Activated T-helper 2 cell treated with anti-CD3 and anti-CD28 coated beads, Interferon-gamma antibody, Interleukin-2, Interleukin-4, amounts not matched to agents 10 μg/mL and 5 μg/mL and 100 μg/mL, durations not matched to agents 14 hours and 24 hours and 36 hours (primary cell): ENCODE measurements at regions of chr20 and their contacts with region 1.

Region 1: GRCh38 chr20:50929299-50930138 is 1.7 kb downstream of the ADNP start:
- DNase-seq: peak; percentile 91
- H3K4me3 Mint-ChIP-seq: peak overlapping the region; percentile 94
- H3K27ac Mint-ChIP-seq: peak overlapping the region; percentile 91
- H3K4me1 Mint-ChIP-seq: peaks cover 46% of the 10 kb centered on the region
- H3K27me3 Mint-ChIP-seq: no peaks in the 10 kb centered on the region

Region 2: DNA sequence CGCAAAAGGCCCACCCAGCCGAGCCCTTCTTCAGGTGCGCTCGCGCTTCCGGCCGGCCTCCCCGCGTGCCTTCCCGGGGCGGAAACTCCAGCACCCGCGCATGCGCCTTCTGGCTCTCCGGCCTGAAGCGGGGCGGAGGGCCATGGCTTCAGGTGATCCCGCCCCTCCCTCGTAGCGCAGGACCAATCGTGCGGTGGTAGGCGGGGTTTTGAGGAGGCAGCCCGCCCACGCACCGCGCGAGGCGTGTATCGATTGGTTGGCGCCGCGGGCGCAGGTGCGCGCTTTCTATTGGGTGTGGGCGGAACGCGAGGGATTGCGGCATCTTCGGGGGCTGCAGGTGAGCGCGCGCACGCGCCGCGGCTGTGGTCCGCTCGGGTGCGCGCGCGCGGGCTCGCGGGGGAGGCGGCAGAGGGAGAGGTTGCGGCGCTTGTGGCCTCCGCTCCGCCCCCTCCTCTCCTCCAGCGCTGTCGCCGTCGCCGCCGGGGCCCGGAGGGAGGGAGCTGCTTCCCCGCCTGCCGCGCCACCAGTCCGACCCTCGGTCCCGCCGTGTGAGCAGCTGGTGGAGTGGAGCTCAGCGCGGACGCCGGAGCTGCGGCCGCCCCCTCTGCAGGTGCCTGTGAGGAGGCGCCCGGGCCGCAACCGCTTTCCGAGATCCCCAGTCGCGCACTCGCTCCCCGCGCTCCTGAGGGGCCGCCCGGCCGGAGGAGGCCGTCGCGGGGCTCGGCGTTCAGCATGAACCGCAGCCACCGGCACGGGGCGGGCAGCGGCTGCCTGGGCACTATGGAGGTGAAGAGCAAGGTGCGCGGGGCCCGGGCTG is 198.3 kb before region 1 on chr20 and contains the start of gene PARD6B:
- intact Hi-C with region 1: loop called (anchors 1 kb)
- DNase-seq: peak; percentile 99
- H3K4me3 Mint-ChIP-seq: peak within 1 kb of the TSS; percentile 84
- H3K27ac Mint-ChIP-seq: peak within 1 kb of the TSS; percentile 78
- H3K4me1 Mint-ChIP-seq: peaks cover 30% of the 10 kb centered on the region
- H3K27me3 Mint-ChIP-seq: no peaks in the 10 kb centered on the region
- total RNA-seq, gene PARD6B: 4.7 and 5.7 TPM in 2 replicates

Region 3: DNA sequence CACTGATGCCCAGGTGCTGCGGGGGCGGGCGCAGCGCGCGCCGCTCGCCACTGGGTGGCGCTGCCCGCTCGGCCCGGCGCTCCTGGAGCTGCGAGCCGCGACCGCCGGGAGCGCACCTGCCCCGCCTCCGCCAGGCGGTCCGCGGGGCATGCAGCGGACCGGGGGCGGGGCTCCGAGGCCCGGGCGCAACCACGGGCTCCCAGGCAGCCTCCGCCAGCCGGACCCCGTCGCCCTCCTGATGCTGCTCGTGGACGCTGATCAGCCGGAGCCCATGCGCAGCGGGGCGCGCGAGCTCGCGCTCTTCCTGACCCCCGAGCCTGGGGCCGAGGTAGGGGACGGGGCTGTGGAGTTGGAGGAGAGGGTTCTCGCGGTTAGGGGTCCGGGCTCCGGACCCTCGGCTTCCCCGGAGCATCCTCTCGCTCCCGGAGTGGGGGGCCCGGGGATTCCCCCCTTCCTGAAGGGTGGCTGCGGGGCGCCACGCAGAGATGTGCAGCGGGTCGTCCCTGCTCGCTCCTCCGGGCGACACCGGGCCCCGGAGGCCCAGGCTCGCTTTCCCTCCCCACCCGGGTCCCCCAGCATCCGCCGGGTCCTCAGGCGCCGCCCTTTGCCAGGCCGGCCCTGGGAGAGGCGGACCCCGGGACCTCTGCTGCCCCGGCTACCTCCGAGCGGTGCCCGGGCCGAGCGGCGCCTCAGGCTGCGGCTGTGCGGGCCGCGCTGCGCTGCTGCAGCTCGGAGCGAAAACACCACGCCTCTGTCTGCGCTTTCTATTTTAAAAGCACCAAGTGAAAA is 134.5 kb before region 1 on chr20 and contains the start of gene BCAS4:
- intact Hi-C with region 1: loop called (anchors 1 kb)
- DNase-seq: peak; percentile 82
- H3K4me3 Mint-ChIP-seq: peak within 1 kb of the TSS; percentile 82
- H3K27ac Mint-ChIP-seq: no peak within 1 kb of the TSS
- H3K4me1 Mint-ChIP-seq: peaks cover 13% of the 10 kb centered on the region
- H3K27me3 Mint-ChIP-seq: no peaks in the 10 kb centered on the region
- total RNA-seq, gene BCAS4: 7.4 and 8.7 TPM in 2 replicates

Region 4: DNA sequence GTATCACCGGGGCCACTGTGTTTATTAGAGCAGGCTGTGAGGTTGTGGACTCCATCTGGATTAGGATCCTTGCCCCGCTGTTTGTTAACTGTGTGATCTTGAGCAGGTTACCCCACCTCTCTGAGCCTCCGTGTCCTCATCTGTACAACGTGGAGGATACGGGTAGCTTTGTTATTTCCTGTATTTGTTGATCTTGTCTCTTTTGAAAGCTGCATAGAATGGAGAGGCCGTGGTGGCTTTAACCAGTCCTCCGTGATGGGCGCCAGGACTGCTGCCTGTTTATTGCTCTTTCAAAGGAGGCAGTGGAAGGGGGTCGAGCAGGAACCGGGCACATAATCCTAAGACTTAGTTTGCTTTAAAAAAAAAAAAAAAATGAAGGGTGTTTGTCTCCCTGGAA is 111.7 kb before region 1 on chr20:
- intact Hi-C with region 1: loop called (anchors 1 kb)
- DNase-seq: no peak
- H3K4me3 Mint-ChIP-seq: no peak overlapping the region
- H3K27ac Mint-ChIP-seq: peak overlapping the region; percentile 94
- H3K4me1 Mint-ChIP-seq: peaks cover 21% of the 10 kb centered on the region
- H3K27me3 Mint-ChIP-seq: no peaks in the 10 kb centered on the region

Region 5: GRCh38 chr20:50913690-50914375 is 15.7 kb before region 1 on chr20:
- intact Hi-C with region 1: loop called (anchors 1 kb)
- DNase-seq: no peak
- H3K4me3 Mint-ChIP-seq: no peak overlapping the region
- H3K27ac Mint-ChIP-seq: peak overlapping the region; percentile 76
- H3K4me1 Mint-ChIP-seq: peaks cover 64% of the 10 kb centered on the region
- H3K27me3 Mint-ChIP-seq: no peaks in the 10 kb centered on the region

Region 6: GRCh38 chr20:50958615-50959542 is 29.4 kb after region 1 on chr20 and contains the start of gene MOCS3:
- intact Hi-C with region 1: loop called (anchors 1 kb)
- DNase-seq: peak; percentile 79
- H3K4me3 Mint-ChIP-seq: peak within 1 kb of the TSS; percentile 97
- H3K27ac Mint-ChIP-seq: peak within 1 kb of the TSS; percentile 96
- H3K4me1 Mint-ChIP-seq: peaks cover 29% of the 10 kb centered on the region
- H3K27me3 Mint-ChIP-seq: no peaks in the 10 kb centered on the region
- total RNA-seq, gene MOCS3: 4.7 and 4.9 TPM in 2 replicates

Region 7: DNA sequence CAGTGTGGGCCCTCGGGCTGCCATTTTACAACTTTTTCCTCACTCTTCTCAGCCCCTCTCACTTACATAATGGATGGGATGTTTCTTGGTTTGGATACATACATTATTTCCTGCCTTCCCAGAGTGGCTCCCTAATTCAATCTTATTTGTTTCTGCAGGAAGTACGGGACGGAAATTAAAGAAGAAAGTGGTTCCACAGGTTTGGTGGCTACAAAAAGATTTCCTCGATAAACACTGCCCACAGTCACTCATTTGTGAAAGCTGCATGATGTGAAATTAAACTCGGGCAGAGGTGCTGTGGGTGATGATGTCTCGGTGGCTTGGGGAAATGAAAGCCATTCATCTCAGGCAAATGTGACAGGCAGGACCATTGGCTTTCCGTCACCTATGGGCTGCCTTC is 212.9 kb after region 1 on chr20:
- intact Hi-C with region 1: no loop called
- DNase-seq: no peak
- H3K4me3 Mint-ChIP-seq: no peak overlapping the region
- H3K27ac Mint-ChIP-seq: no peak overlapping the region
- H3K4me1 Mint-ChIP-seq: no peaks in the 10 kb centered on the region
- H3K27me3 Mint-ChIP-seq: peaks cover 14% of the 10 kb centered on the region